Panc1 (cell line): ENCODE measurements at regions of chr3 and their contacts with region 1.

Region 1: GRCh38 chr3:31132132-31132769 is 237.8 kb upstream of the GADL1 start:
- DNase-seq: peak; percentile 5
- ATAC-seq: no peak
- H3K4me3 ChIP-seq: no peak overlapping the region
- H3K27ac ChIP-seq: no peak overlapping the region
- H3K4me1 ChIP-seq: no peaks in the 10 kb centered on the region
- H3K27me3 ChIP-seq: no peaks in the 10 kb centered on the region
- CTCF ChIP-seq: peak; percentile 51; the same call in 1 of the 2 replicates

Region 2: GRCh38 chr3:30308131-30308530 is 824.1 kb before region 1 on chr3:
- CTCF ChIA-PET with region 1: no interaction called
- POLR2A ChIA-PET with region 1: no interaction called
- in situ Hi-C with region 1: no loop called
- intact Hi-C with region 1: no loop called
- DNase-seq: no peak
- ATAC-seq: no peak
- H3K4me3 ChIP-seq: no peak overlapping the region
- H3K27ac ChIP-seq: no peak overlapping the region
- H3K4me1 ChIP-seq: no peaks in the 10 kb centered on the region
- H3K27me3 ChIP-seq: no peaks in the 10 kb centered on the region
- CTCF ChIP-seq: no peak

Region 3: GRCh38 chr3:30768703-30769685 is 363.3 kb before region 1 on chr3:
- CTCF ChIA-PET with region 1: no interaction called
- POLR2A ChIA-PET with region 1: no interaction called
- in situ Hi-C with region 1: no loop called
- intact Hi-C with region 1: loop called (anchors 5 kb)
- DNase-seq: no peak
- ATAC-seq: 0 out of 2 replicates have a peak, but pooled peaks have one; percentile 60
- H3K4me3 ChIP-seq: no peak overlapping the region
- H3K27ac ChIP-seq: no peak overlapping the region
- H3K4me1 ChIP-seq: no peaks in the 10 kb centered on the region
- H3K27me3 ChIP-seq: no peaks in the 10 kb centered on the region
- CTCF ChIP-seq: peak; percentile 85

Region 4: GRCh38 chr3:30934208-30934550 is 198.1 kb before region 1 on chr3:
- CTCF ChIA-PET with region 1: no interaction called
- POLR2A ChIA-PET with region 1: no interaction called
- in situ Hi-C with region 1: no loop called
- intact Hi-C with region 1: loop called (anchors 5 kb)
- DNase-seq: peak; percentile 17
- ATAC-seq: peak; percentile 65; the same call in 1 of the 2 replicates
- H3K4me3 ChIP-seq: no peak overlapping the region
- H3K27ac ChIP-seq: no peak overlapping the region
- H3K4me1 ChIP-seq: no peaks in the 10 kb centered on the region
- H3K27me3 ChIP-seq: no peaks in the 10 kb centered on the region
- CTCF ChIP-seq: peak; percentile 48; the same call in 1 of the 2 replicates